Dendritic cell treated with granulocyte-macrophage colony-stimulating factor and Interleukin-4, amounts not matched to agents 40 ng/mL and 50 ng/mL, for 4 days (primary cell): ENCODE measurements at regions of chr15 and their contacts with region 1.

Region 1: GRCh38 chr15:31263751-31264558 is 62.7 kb upstream of the KLF13 start:
- H3K4me3 Mint-ChIP-seq: peak overlapping the region; percentile 17
- H3K27ac Mint-ChIP-seq: peak overlapping the region; percentile 95
- H3K4me1 Mint-ChIP-seq: peaks cover 100% of the 10 kb centered on the region
- H3K27me3 Mint-ChIP-seq: no peaks in the 10 kb centered on the region

Region 2: GRCh38 chr15:31302778-31303725 is 39.1 kb after region 1 on chr15:
- intact Hi-C with region 1: loop called (anchors 5 kb)
- H3K4me3 Mint-ChIP-seq: no peak overlapping the region
- H3K27ac Mint-ChIP-seq: peak overlapping the region; percentile 60
- H3K4me1 Mint-ChIP-seq: peaks cover 52% of the 10 kb centered on the region
- H3K27me3 Mint-ChIP-seq: peaks cover 13% of the 10 kb centered on the region

Region 3: GRCh38 chr15:31326156-31326732 is 62.3 kb after region 1 on chr15:
- intact Hi-C with region 1: loop called (anchors 1 kb)
- H3K4me3 Mint-ChIP-seq: peak overlapping the region; percentile 94
- H3K27ac Mint-ChIP-seq: peak overlapping the region; percentile 97
- H3K4me1 Mint-ChIP-seq: peaks cover 59% of the 10 kb centered on the region
- H3K27me3 Mint-ChIP-seq: no peaks in the 10 kb centered on the region